ENCODE measurements at regions of chr9 and their contacts with region 1.

Region 1: GRCh38 chr9:21110708-21111576 is 30.7 kb downstream of the IFNW1 start:
- DNase-seq: peak; percentile 56
- H3K4me3 ChIP-seq: no peak overlapping the region
- H3K27ac ChIP-seq: no peak overlapping the region
- H3K27me3 ChIP-seq: no peaks in the 10 kb centered on the region
- CTCF ChIP-seq: peak; percentile 91

Region 2: GRCh38 chr9:19925817-19926503 is 1185.0 kb before region 1 on chr9:
- CTCF ChIA-PET with region 1: interaction called, 25 read pairs
- POLR2A ChIA-PET with region 1: no interaction called
- DNase-seq: peak; percentile 55
- H3K4me3 ChIP-seq: peak overlapping the region; percentile 65
- H3K27ac ChIP-seq: no peak overlapping the region
- H3K27me3 ChIP-seq: no peaks in the 10 kb centered on the region
- CTCF ChIP-seq: peak; percentile 98

Region 3: GRCh38 chr9:20356403-20357035 is 754.4 kb before region 1 on chr9:
- CTCF ChIA-PET with region 1: interaction called, 18 read pairs
- POLR2A ChIA-PET with region 1: no interaction called
- DNase-seq: peak; percentile 69
- H3K4me3 ChIP-seq: no peak overlapping the region
- H3K27ac ChIP-seq: peak overlapping the region; percentile 53
- H3K27me3 ChIP-seq: no peaks in the 10 kb centered on the region
- CTCF ChIP-seq: peak; percentile 70

Region 4: GRCh38 chr9:20611751-20612287 is 499.1 kb before region 1 on chr9:
- CTCF ChIA-PET with region 1: interaction called, 10 read pairs
- POLR2A ChIA-PET with region 1: no interaction called
- DNase-seq: no peak
- H3K4me3 ChIP-seq: peak overlapping the region; percentile 7; the same call in 1 of the 2 replicates
- H3K27ac ChIP-seq: no peak overlapping the region
- H3K27me3 ChIP-seq: no peaks in the 10 kb centered on the region
- CTCF ChIP-seq: peak; percentile 57

Region 5: GRCh38 chr9:20811872-20812271 is 299.1 kb before region 1 on chr9:
- CTCF ChIA-PET with region 1: no interaction called
- POLR2A ChIA-PET with region 1: no interaction called
- DNase-seq: no peak
- H3K4me3 ChIP-seq: no peak overlapping the region
- H3K27ac ChIP-seq: no peak overlapping the region
- H3K27me3 ChIP-seq: no peaks in the 10 kb centered on the region
- CTCF ChIP-seq: no peak

Region 6: GRCh38 chr9:20884985-20885593 is 225.9 kb before region 1 on chr9:
- CTCF ChIA-PET with region 1: interaction called, 61 read pairs
- POLR2A ChIA-PET with region 1: no interaction called
- DNase-seq: peak; percentile 10
- H3K4me3 ChIP-seq: no peak overlapping the region
- H3K27ac ChIP-seq: no peak overlapping the region
- H3K27me3 ChIP-seq: no peaks in the 10 kb centered on the region
- CTCF ChIP-seq: peak; percentile 64

Region 7: DNA sequence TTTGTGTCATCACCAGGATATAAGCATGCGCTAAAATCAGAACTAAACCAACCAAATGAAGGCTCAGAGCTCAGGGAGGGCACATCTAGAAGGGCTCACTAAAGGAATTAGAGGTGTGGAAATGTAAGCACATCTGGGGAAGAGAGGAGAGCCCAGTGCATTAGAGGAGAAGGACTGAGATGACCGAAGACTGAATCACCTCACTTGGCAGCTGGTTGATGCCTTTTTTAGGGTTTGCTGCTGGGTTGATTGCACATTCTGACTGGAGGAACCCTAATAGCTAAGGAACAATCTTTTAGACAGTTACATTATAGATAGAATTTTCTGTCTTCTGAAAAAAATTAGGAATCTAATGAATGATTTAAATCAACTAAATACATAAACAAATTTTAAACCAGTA is 63.7 kb after region 1 on chr9:
- CTCF ChIA-PET with region 1: no interaction called
- POLR2A ChIA-PET with region 1: no interaction called
- DNase-seq: no peak
- H3K4me3 ChIP-seq: no peak overlapping the region
- H3K27ac ChIP-seq: no peak overlapping the region
- H3K27me3 ChIP-seq: no peaks in the 10 kb centered on the region
- CTCF ChIP-seq: no peak

Measured in AG04450 (cell line).